HCT116 (cell line): ENCODE measurements at regions of chr6 and their contacts with region 1.

Region 1: GRCh38 chr6:133973109-133973971 is 20.3 kb downstream of the TBPL1 start:
- DNase-seq: peak; percentile 44
- ATAC-seq: 0 out of 2 replicates have a peak, but pooled peaks have one; percentile 40
- H3K4me3 ChIP-seq: no peak overlapping the region
- H3K27ac ChIP-seq: no peak overlapping the region
- H3K4me1 ChIP-seq: peaks cover under 1 to 17% of the 10 kb centered on the region in 2 experiments
- H3K27me3 ChIP-seq: no peaks in the 10 kb centered on the region
- CTCF ChIP-seq: peak; percentile 54 to 85 (median 81)
- POLR2A ChIP-seq: no peak
- RAD21 ChIP-seq: peak; percentile 86

Region 2: GRCh38 chr6:133923938-133924593 is 49.3 kb before region 1 on chr6:
- CTCF ChIA-PET with region 1: interaction called, 4 read pairs
- POLR2A ChIA-PET with region 1: no interaction called
- RAD21 ChIA-PET with region 1: no interaction called
- intact Hi-C with region 1: loop called (anchors 1 kb)
- DNase-seq: peak; percentile 78
- ATAC-seq: peak; percentile 92
- H3K4me3 ChIP-seq: no peak overlapping the region
- H3K27ac ChIP-seq: no peak overlapping the region
- H3K4me1 ChIP-seq: peaks cover 3 to 5% of the 10 kb centered on the region in 2 experiments; a peak in 1 of 4 replicates
- H3K27me3 ChIP-seq: no peaks in the 10 kb centered on the region
- CTCF ChIP-seq: peak; percentile 69 to 92 (median 88)
- POLR2A ChIP-seq: no peak
- RAD21 ChIP-seq: peak; percentile 98

Region 3: DNA sequence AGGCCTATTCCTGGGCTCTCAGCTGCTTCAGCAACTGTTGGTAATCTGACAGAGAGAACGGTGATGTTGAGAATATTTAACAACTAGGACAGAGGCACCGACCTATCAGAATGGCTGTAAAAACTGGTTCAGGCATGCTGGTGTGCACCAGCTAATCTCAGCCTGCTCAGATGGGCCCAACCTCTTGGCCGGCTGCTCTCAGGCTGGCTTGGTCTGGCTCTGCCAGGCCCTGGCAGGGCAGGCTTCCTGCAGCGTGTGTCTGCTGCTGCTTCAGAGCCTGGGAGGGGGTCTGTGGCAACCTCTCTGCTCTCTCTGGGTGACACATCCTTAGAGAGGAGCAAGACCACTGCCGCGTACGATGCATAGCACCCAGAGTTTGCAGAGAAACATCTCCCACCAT is 74.3 kb after region 1 on chr6:
- CTCF ChIA-PET with region 1: no interaction called
- POLR2A ChIA-PET with region 1: no interaction called
- RAD21 ChIA-PET with region 1: no interaction called
- intact Hi-C with region 1: loop called (anchors 5 kb)
- DNase-seq: no peak
- ATAC-seq: no peak
- H3K4me3 ChIP-seq: no peak overlapping the region
- H3K27ac ChIP-seq: no peak overlapping the region
- H3K4me1 ChIP-seq: peaks cover 0 to 9% of the 10 kb centered on the region in 2 experiments; a peak in 3 of 4 replicates
- H3K27me3 ChIP-seq: no peaks in the 10 kb centered on the region
- CTCF ChIP-seq: no peak
- POLR2A ChIP-seq: no peak
- RAD21 ChIP-seq: no peak

Region 4: GRCh38 chr6:134063966-134064445 is 90.7 kb after region 1 on chr6:
- CTCF ChIA-PET with region 1: interaction called, 17 read pairs
- POLR2A ChIA-PET with region 1: no interaction called
- RAD21 ChIA-PET with region 1: interaction called in 1 of 2 experiments, 4 read pairs
- intact Hi-C with region 1: loop called (anchors 1 kb)
- DNase-seq: peak; percentile 59
- ATAC-seq: peak; percentile 88
- H3K4me3 ChIP-seq: no peak overlapping the region
- H3K27ac ChIP-seq: no peak overlapping the region
- H3K4me1 ChIP-seq: peaks cover 5 to 22% of the 10 kb centered on the region in 2 experiments; a peak in 2 of 4 replicates
- H3K27me3 ChIP-seq: no peaks in the 10 kb centered on the region
- CTCF ChIP-seq: peak; percentile 87 to 97 (median 88)
- POLR2A ChIP-seq: no peak
- RAD21 ChIP-seq: peak; percentile 89

Region 5: DNA sequence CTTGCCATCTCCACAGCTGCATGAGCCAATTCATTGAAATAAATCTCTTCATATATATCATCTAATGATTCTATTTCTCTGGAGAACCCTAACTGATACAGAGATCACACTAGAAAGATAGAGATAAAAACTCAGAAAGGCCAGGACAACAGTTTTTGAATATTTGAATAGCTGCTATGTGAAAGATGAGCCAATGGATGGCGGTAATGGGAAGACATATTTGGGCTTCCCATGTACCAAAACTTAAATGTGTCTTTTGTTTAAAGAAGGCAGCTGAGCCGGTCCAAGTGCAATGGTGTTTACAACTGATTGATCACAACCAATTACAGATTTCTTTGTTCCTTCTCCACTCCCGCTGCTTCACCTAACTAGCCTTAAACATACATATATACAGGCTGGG is 309.5 kb after region 1 on chr6:
- CTCF ChIA-PET with region 1: no interaction called
- POLR2A ChIA-PET with region 1: no interaction called
- RAD21 ChIA-PET with region 1: no interaction called
- intact Hi-C with region 1: no loop called
- DNase-seq: no peak
- ATAC-seq: no peak
- H3K4me3 ChIP-seq: no peak overlapping the region
- H3K27ac ChIP-seq: no peak overlapping the region
- H3K4me1 ChIP-seq: peaks cover 0 to 3% of the 10 kb centered on the region in 2 experiments; a peak in 1 of 4 replicates
- H3K27me3 ChIP-seq: no peaks in the 10 kb centered on the region
- CTCF ChIP-seq: 0 out of 6 replicates have a peak, but pooled peaks of 1 of the 3 experiments have one; percentile 17
- POLR2A ChIP-seq: no peak
- RAD21 ChIP-seq: peak; percentile 12; the same call in 1 of the 2 replicates